Mammary epithelial cell (primary cell): ENCODE measurements at regions of chr7 and their contacts with region 1.

Region 1: DNA sequence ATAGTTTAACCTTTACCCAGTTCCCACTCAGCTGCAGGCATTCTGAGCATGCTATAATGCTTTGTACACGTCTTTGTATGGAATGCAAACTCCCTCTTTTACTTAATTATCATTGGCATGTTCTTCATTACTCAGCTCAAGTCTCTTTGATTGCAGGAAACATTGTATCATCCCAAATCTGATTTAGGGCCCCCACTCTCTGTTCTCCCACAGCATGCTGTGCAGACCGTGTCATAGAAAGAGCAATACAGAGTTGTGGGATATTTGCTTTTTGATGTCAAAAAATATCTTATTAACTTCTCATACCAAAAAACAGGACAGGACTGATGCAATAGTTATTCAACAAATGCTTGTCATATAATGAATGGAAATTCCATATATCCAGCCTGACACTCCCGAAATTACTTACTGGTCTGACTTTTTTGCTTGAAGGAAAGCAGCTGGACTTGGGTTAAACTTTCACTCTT is 1081.5 kb upstream of the C7orf33 start:
- DNase-seq: peak; percentile 17
- H3K4me3 ChIP-seq: no peak overlapping the region
- H3K27ac ChIP-seq: no peak overlapping the region
- H3K4me1 ChIP-seq: peaks cover 13% of the 10 kb centered on the region
- H3K27me3 ChIP-seq: no peaks in the 10 kb centered on the region
- CTCF ChIP-seq: no peak

Region 2: DNA sequence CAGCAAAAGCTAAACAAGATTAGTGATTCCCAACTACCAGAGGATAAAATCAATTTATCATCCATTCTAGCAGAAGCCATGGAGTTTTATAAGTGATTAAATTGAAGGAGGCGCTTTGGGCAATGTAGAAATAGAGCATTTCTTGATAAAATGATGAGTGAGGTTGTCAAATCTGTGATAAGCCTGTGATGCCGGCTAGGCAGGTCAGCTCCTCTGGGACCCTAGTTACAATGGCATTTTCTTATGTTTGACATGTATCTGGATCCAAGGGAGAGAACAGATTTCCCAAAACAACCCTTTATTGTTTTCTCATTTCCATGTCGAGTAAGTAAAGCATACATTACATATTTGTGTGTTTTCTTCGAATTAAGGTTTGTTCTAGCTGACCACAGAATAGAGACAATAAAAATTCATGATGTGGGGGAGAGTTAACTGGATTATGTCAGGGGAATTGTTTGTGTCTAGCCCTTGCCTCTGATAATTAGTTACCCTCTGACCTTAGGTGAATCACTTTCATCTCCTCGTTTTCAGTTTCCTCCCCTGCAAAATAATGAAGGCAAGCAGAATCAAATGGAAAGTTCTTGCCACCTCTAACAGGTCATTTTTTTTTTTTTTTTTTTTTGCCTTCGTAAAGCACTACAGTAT is 1014.0 kb before region 1 on chr7:
- CTCF ChIA-PET with region 1: no interaction called
- dilution Hi-C with region 1: no loop called
- in situ Hi-C with region 1: no loop called
- intact Hi-C with region 1: no loop called
- DNase-seq: no peak
- H3K4me3 ChIP-seq: no peak overlapping the region
- H3K27ac ChIP-seq: no peak overlapping the region
- H3K4me1 ChIP-seq: no peaks in the 10 kb centered on the region
- H3K27me3 ChIP-seq: no peaks in the 10 kb centered on the region
- CTCF ChIP-seq: no peak

Region 3: GRCh38 chr7:146844405-146844804 is 664.7 kb before region 1 on chr7:
- CTCF ChIA-PET with region 1: no interaction called
- dilution Hi-C with region 1: no loop called
- in situ Hi-C with region 1: no loop called
- intact Hi-C with region 1: no loop called
- DNase-seq: no peak
- H3K4me3 ChIP-seq: no peak overlapping the region
- H3K27ac ChIP-seq: no peak overlapping the region
- H3K4me1 ChIP-seq: no peaks in the 10 kb centered on the region
- H3K27me3 ChIP-seq: no peaks in the 10 kb centered on the region
- CTCF ChIP-seq: no peak

Region 4: GRCh38 chr7:147570390-147570789 is 61.3 kb after region 1 on chr7:
- CTCF ChIA-PET with region 1: no interaction called
- dilution Hi-C with region 1: no loop called
- in situ Hi-C with region 1: no loop called
- intact Hi-C with region 1: loop called (anchors 10 kb)
- DNase-seq: peak; percentile 48
- H3K4me3 ChIP-seq: no peak overlapping the region
- H3K27ac ChIP-seq: peak overlapping the region; percentile 70
- H3K4me1 ChIP-seq: peaks cover 12% of the 10 kb centered on the region
- H3K27me3 ChIP-seq: no peaks in the 10 kb centered on the region
- CTCF ChIP-seq: no peak

Region 5: GRCh38 chr7:148276314-148277041 is 767.4 kb after region 1 on chr7:
- CTCF ChIA-PET with region 1: no interaction called
- dilution Hi-C with region 1: no loop called
- in situ Hi-C with region 1: no loop called
- intact Hi-C with region 1: no loop called
- DNase-seq: no peak
- H3K4me3 ChIP-seq: no peak overlapping the region
- H3K27ac ChIP-seq: no peak overlapping the region
- H3K4me1 ChIP-seq: no peaks in the 10 kb centered on the region
- H3K27me3 ChIP-seq: peaks cover 6% of the 10 kb centered on the region
- CTCF ChIP-seq: no peak

Region 6: DNA sequence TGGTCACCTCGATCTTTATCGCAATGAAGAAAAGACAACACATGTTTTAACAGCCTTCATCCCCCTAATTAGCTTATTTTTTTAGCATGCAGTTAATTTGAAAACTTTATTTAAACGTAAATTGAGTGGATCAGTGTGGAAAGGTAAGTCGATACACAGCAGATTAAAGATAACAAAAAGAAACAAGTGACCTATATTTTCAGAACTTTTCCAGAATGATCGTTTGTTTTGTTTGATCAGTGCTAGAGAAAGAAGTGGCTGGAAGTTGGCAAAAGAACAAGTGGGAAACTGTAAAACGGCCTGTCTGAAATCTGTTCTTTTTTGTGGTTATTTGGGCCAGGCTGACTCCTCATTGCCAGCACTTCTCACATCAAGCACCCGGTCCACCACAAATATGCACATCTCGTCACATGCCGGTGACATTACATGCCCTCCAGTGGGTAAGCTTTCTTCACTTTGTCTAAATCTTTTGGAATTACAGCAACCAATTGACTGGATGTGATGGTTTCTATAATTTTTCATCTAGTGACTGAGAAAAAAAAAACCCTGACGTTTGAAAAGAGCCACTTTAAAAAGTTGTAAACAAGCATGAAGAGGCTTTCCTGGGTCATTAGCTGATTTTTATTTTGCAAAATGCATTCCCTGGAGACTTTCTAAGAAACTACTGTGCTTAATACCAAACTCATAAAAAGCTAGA is 1114.7 kb after region 1 on chr7:
- CTCF ChIA-PET with region 1: no interaction called
- dilution Hi-C with region 1: no loop called
- in situ Hi-C with region 1: no loop called
- intact Hi-C with region 1: no loop called
- DNase-seq: peak; percentile 36
- H3K4me3 ChIP-seq: no peak overlapping the region
- H3K27ac ChIP-seq: no peak overlapping the region
- H3K4me1 ChIP-seq: peaks cover 11% of the 10 kb centered on the region
- H3K27me3 ChIP-seq: no peaks in the 10 kb centered on the region
- CTCF ChIP-seq: no peak